Breast epithelium (tissue), 4 donors: ENCODE measurements at regions of chr4 and their contacts with region 1.

Region 1: DNA sequence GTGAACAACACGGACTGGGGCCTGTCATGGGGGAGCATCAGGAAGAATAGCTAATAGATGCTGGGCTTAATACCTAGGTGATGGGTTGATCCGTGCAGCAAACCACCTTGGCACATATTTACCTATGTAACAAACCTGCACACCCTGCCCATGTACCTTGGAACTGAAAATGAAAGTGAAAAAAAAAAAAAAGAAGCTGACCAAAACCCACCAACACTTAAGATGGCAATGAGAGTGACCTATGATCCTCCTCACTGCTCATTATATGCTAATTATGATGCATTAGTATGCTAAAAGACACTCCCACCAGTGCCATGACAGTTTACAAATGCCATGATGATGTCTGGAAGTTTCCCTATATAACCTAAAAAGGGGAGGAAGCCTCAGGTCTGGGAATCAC is 503.2 kb upstream of the CTSO start:
- DNase-seq: no peak
- H3K4me3 ChIP-seq: no peak overlapping the region
- H3K27ac ChIP-seq: no peak overlapping the region
- H3K4me1 ChIP-seq: no peaks in the 10 kb centered on the region
- H3K27me3 ChIP-seq: no peaks in the 10 kb centered on the region
- CTCF ChIP-seq: no peak
- POLR2A ChIP-seq: no peak

Region 2: GRCh38 chr4:156128616-156129015 is 328.2 kb before region 1 on chr4:
- intact Hi-C with region 1: no loop called
- DNase-seq: no peak
- H3K4me3 ChIP-seq: no peak overlapping the region
- H3K27ac ChIP-seq: no peak overlapping the region
- H3K4me1 ChIP-seq: no peaks in the 10 kb centered on the region
- H3K27me3 ChIP-seq: no peaks in the 10 kb centered on the region
- CTCF ChIP-seq: no peak
- POLR2A ChIP-seq: no peak

Region 3: DNA sequence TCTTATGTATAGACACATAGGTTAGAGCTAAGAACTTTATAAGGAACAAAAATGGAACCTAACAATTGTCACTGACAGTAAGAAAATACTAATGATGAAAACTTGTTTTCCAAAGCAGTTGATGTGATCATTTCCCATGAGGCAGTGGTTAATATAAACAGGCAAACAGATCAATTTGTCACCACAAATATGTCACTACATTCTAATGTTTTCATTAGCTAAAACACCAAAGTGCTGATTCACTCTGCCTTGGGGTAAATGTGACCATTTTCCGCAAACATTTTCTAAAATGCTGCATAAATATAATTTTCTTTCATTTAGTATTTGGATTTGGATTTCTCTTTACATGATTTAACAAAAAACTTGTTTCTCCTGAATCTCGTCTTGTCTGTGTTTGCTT is 94.2 kb before region 1 on chr4:
- intact Hi-C with region 1: loop called (anchors 5 kb)
- DNase-seq: no peak
- H3K4me3 ChIP-seq: no peak overlapping the region
- H3K27ac ChIP-seq: no peak overlapping the region
- H3K4me1 ChIP-seq: no peaks in the 10 kb centered on the region
- H3K27me3 ChIP-seq: no peaks in the 10 kb centered on the region
- CTCF ChIP-seq: no peak
- POLR2A ChIP-seq: no peak

Region 4: GRCh38 chr4:156558373-156559025 is 101.7 kb after region 1 on chr4:
- intact Hi-C with region 1: no loop called
- DNase-seq: no peak
- H3K4me3 ChIP-seq: no peak overlapping the region
- H3K27ac ChIP-seq: no peak overlapping the region
- H3K4me1 ChIP-seq: no peaks in the 10 kb centered on the region
- H3K27me3 ChIP-seq: no peaks in the 10 kb centered on the region
- CTCF ChIP-seq: no peak
- POLR2A ChIP-seq: no peak

Region 5: GRCh38 chr4:157231525-157231924 is 774.7 kb after region 1 on chr4:
- intact Hi-C with region 1: no loop called
- DNase-seq: no peak
- H3K4me3 ChIP-seq: no peak overlapping the region
- H3K27ac ChIP-seq: no peak overlapping the region
- H3K4me1 ChIP-seq: no peaks in the 10 kb centered on the region
- H3K27me3 ChIP-seq: no peaks in the 10 kb centered on the region
- CTCF ChIP-seq: no peak
- POLR2A ChIP-seq: no peak

Region 6: GRCh38 chr4:157421365-157421764 is 964.5 kb after region 1 on chr4:
- intact Hi-C with region 1: no loop called
- DNase-seq: no peak
- H3K4me3 ChIP-seq: no peak overlapping the region
- H3K27ac ChIP-seq: no peak overlapping the region
- H3K4me1 ChIP-seq: no peaks in the 10 kb centered on the region
- H3K27me3 ChIP-seq: no peaks in the 10 kb centered on the region
- CTCF ChIP-seq: no peak
- POLR2A ChIP-seq: no peak